PC-3 (cell line): ENCODE measurements at regions of chr14 and their contacts with region 1.

Region 1: DNA sequence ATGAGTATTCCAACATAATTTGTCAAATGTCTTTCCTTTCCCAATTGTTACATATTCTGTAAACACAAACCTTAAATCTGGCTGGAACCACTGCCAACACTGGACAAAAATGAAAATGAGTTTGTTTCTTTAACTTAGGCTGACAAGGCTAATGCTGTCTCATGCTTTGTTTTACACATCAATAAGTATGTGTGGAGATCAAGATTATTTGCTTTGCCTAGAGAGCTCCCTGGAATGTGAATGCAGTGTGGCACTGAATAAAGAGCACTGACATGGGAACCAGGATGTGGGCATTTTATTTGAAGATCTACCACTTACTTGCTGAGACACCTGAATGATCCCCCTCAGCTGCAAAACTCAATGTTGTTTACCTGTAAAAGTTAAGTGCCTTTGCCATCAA is 61.7 kb downstream of the RALGAPA1 start:
- DNase-seq: peak; percentile 45
- ATAC-seq: peak; percentile 97
- H3K4me3 ChIP-seq: no peak overlapping the region
- H3K27ac ChIP-seq: peak overlapping the region; percentile 8; the same call in 1 of the 2 replicates
- H3K4me1 ChIP-seq: no peaks in the 10 kb centered on the region
- H3K27me3 ChIP-seq: no peaks in the 10 kb centered on the region
- CTCF ChIP-seq: no peak

Region 2: GRCh38 chr14:35808076-35808652 is 60.8 kb after region 1 on chr14:
- CTCF ChIA-PET with region 1: interaction called, 6 read pairs
- POLR2A ChIA-PET with region 1: no interaction called
- intact Hi-C with region 1: loop called (anchors 5 kb)
- DNase-seq: peak; percentile 67
- ATAC-seq: peak; percentile 41
- H3K4me3 ChIP-seq: peak overlapping the region; percentile 71
- H3K27ac ChIP-seq: peak overlapping the region; percentile 57
- H3K4me1 ChIP-seq: peaks cover 17% of the 10 kb centered on the region
- H3K27me3 ChIP-seq: no peaks in the 10 kb centered on the region
- CTCF ChIP-seq: no peak